Naive thymus-derived CD4-positive, alpha-beta T cell (primary cell): ENCODE measurements at regions of chr3 and their contacts with region 1.

Region 1: GRCh38 chr3:8622873-8623691 is 21.5 kb downstream of the SSUH2 start:
- DNase-seq: peak in 2 of 9 donors; percentile 21 to 44
- ATAC-seq: peak; percentile 65
- H3K4me3 ChIP-seq: no peak overlapping the region
- H3K4me3 Mint-ChIP-seq: peak overlapping the region in 2 of 10 donors; percentile 50 to 71
- H3K27ac ChIP-seq: no peak overlapping the region
- H3K27ac Mint-ChIP-seq: peak overlapping the region in 1 of 9 donors; percentile 52
- H3K4me1 ChIP-seq: no peaks in the 10 kb centered on the region
- H3K4me1 Mint-ChIP-seq: peaks cover 0 to 11% (median 0%) of the 10 kb centered on the region in 7 donors
- H3K27me3 ChIP-seq: no peaks in the 10 kb centered on the region
- H3K27me3 Mint-ChIP-seq: peaks cover 0 to 11% (median 0%) of the 10 kb centered on the region in 5 donors

Region 2: GRCh38 chr3:8441969-8442559 is 181.0 kb before region 1 on chr3:
- CTCF ChIA-PET with region 1: no interaction called
- POLR2A ChIA-PET with region 1: no interaction called
- intact Hi-C with region 1: loop called in 1 of 2 experiments (anchors 2 kb)
- DNase-seq: no peak
- ATAC-seq: no peak
- H3K4me3 ChIP-seq: no peak overlapping the region
- H3K4me3 Mint-ChIP-seq: no peak overlapping the region
- H3K27ac ChIP-seq: no peak overlapping the region
- H3K27ac Mint-ChIP-seq: no peak overlapping the region
- H3K4me1 ChIP-seq: no peaks in the 10 kb centered on the region
- H3K4me1 Mint-ChIP-seq: peaks cover 0 to 5% (median 0%) of the 10 kb centered on the region in 7 donors
- H3K27me3 ChIP-seq: no peaks in the 10 kb centered on the region
- H3K27me3 Mint-ChIP-seq: peaks cover 0 to 15% (median 6%) of the 10 kb centered on the region in 5 donors